CD14-positive monocyte (primary cell): ENCODE measurements at regions of chr19 and their contacts with region 1.

Region 1: GRCh38 chr19:36687214-36688056 is at the start of gene ZNF567:
- DNase-seq: peak; percentile 88 to 90 (median 89)
- H3K4me3 ChIP-seq: peak within 1 kb of the TSS; percentile 35 to 92 (median 63)
- H3K4me3 Mint-ChIP-seq: peak within 1 kb of the TSS; percentile 96 to 99
- H3K27ac ChIP-seq: peak within 1 kb of the TSS; percentile 13 to 77
- H3K27ac Mint-ChIP-seq: peak within 1 kb of the TSS; percentile 66 to 90 (median 83)
- H3K4me1 ChIP-seq: peaks cover 15 to 23% of the 10 kb centered on the region in 2 donors
- H3K4me1 Mint-ChIP-seq: peaks cover 24% of the 10 kb centered on the region
- H3K27me3 ChIP-seq: no peaks in the 10 kb centered on the region
- H3K27me3 Mint-ChIP-seq: peaks cover 0 to 1% (median 0%) of the 10 kb centered on the region in 3 donors
- CTCF ChIP-seq: no peak
- polyA plus RNA-seq, gene ZNF567: 0.84 to 1.7 (median 1.5) TPM

Region 2: DNA sequence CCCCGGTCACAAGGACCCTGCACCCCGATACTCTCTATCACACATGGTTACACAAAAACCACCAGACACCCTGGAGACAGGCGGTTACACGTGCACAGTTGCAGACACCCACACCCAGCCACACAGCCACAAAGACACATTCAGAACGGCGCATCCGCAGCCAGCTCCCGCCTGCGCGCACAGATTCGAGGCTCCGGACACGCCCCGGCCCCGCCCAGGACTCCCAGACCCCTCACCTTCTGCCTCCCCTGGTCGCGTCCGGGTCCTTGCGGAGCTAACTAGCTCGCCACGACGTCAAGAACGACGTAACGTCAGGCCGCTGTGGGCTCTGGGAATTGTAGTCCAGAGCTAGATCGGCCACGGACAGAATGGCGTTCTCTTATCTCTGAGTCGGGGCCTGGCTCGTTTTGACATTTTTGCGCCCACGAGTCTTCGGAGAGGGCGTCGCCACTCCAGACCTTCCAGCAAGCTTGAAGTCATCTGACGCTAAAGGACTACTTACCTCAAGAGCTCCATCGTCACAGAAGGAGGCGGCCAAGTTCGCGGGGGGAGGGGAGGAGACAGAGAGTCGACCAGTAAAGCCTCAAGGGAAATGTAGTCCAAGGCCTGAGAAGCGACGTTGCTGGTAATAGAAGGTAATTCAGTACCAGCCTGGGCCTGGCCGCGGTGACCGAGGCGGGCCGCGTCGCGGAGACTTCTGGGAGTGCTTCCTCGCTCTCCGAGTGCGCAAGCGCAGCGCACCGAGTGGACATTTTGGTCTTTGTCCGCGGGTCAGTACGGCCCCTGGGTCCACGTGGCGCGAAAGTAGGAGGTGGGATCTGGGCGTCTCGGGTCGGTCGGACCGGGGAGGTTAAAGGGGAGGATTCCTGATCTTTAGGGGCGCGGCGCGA is 472.8 kb before region 1 on chr19 and contains the starts of genes ZNF146 and ZNF565:
- intact Hi-C with region 1: loop called in 1 of 2 experiments (anchors 10 kb)
- DNase-seq: peak; percentile 96 to 99 (median 96)
- H3K4me3 ChIP-seq: peak within 1 kb of the TSS; percentile 61 to 92 (median 69)
- H3K4me3 Mint-ChIP-seq: no peak within 1 kb of the TSS
- H3K27ac ChIP-seq: peak within 1 kb of the TSS; percentile 72 to 95
- H3K27ac Mint-ChIP-seq: no peak within 1 kb of the TSS
- H3K4me1 ChIP-seq: peaks cover 11 to 18% of the 10 kb centered on the region in 2 donors
- H3K4me1 Mint-ChIP-seq: peaks cover 5% of the 10 kb centered on the region
- H3K27me3 ChIP-seq: no peaks in the 10 kb centered on the region
- H3K27me3 Mint-ChIP-seq: no peaks in the 10 kb centered on the region
- CTCF ChIP-seq: no peak
- polyA plus RNA-seq, gene ZNF146: 12.2 to 26.5 (median 15.8) TPM
- polyA plus RNA-seq, gene ZNF565: 1.5 to 3.5 (median 2.1) TPM

Region 3: GRCh38 chr19:36915992-36916830 is 228.8 kb after region 1 on chr19 and contains the starts of genes ZNF568 and ZNF829:
- intact Hi-C with region 1: loop called in 1 of 2 experiments (anchors 10 kb)
- DNase-seq: peak; percentile 62 to 72 (median 69)
- H3K4me3 ChIP-seq: peak within 1 kb of the TSS; percentile 57 to 99 (median 78)
- H3K4me3 Mint-ChIP-seq: peak within 1 kb of the TSS; percentile 96
- H3K27ac ChIP-seq: peak within 1 kb of the TSS; percentile 53 to 84
- H3K27ac Mint-ChIP-seq: peak within 1 kb of the TSS; percentile 79 to 96 (median 90)
- H3K4me1 ChIP-seq: peaks cover 6 to 17% of the 10 kb centered on the region in 2 donors
- H3K4me1 Mint-ChIP-seq: peaks cover 18% of the 10 kb centered on the region
- H3K27me3 ChIP-seq: no peaks in the 10 kb centered on the region
- H3K27me3 Mint-ChIP-seq: peaks cover 0 to 4% (median 2%) of the 10 kb centered on the region in 3 donors
- CTCF ChIP-seq: peak; percentile 66
- polyA plus RNA-seq, gene ZNF568: 0.38 to 0.96 (median 0.79) TPM
- polyA plus RNA-seq, gene ZNF829: 0.05 to 0.14 (median 0.08) TPM

Region 4: GRCh38 chr19:37077934-37078725 is 390.7 kb after region 1 on chr19 and contains the start of gene ZNF420:
- intact Hi-C with region 1: loop called in 1 of 2 experiments (anchors 5 kb)
- DNase-seq: peak; percentile 82 to 90 (median 85)
- H3K4me3 ChIP-seq: peak within 1 kb of the TSS; percentile 57 to 94 (median 89)
- H3K4me3 Mint-ChIP-seq: peak within 1 kb of the TSS; percentile 99 to 100
- H3K27ac ChIP-seq: peak within 1 kb of the TSS; percentile 40 to 75
- H3K27ac Mint-ChIP-seq: peak within 1 kb of the TSS; percentile 62 to 96 (median 85)
- H3K4me1 ChIP-seq: peaks cover 16 to 19% of the 10 kb centered on the region in 2 donors
- H3K4me1 Mint-ChIP-seq: peaks cover 20% of the 10 kb centered on the region
- H3K27me3 ChIP-seq: no peaks in the 10 kb centered on the region
- H3K27me3 Mint-ChIP-seq: peaks cover 0 to 5% (median 0%) of the 10 kb centered on the region in 3 donors
- CTCF ChIP-seq: no peak
- polyA plus RNA-seq, gene ZNF420: 1.4 to 2.5 (median 1.8) TPM